ENCODE measurements at regions of chr12 and their contacts with region 1.

Region 1: GRCh38 chr12:94101738-94102660 is 46.4 kb upstream of the PLXNC1 start:
- DNase-seq: peak; percentile 93
- ATAC-seq: peak; percentile 85
- H3K4me3 Mint-ChIP-seq: peak overlapping the region; percentile 79
- H3K27ac Mint-ChIP-seq: peak overlapping the region; percentile 84
- H3K4me1 Mint-ChIP-seq: peaks cover 39% of the 10 kb centered on the region
- H3K27me3 Mint-ChIP-seq: peaks cover 9% of the 10 kb centered on the region

Region 2: DNA sequence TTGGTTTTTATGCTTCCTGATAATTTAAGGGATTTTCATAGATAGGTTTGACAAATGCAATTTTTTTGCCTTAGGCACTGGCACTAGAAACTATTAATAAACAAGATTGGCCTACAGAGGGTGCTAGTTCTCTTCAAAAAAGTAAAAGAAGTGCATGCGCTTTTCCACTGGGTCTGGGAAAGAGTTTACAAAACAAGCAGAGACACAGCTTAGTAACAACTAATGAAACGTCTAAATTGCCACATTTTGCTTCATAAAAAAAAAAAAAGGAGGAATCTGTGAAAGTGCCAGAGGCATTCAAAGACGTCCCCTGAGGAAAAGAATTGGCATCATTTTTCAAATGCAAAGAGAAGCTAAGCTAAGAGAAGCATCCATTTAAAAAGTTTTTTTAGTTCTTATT is 1114.6 kb before region 1 on chr12:
- CTCF ChIA-PET with region 1: interaction called, 34 read pairs
- POLR2A ChIA-PET with region 1: no interaction called
- DNase-seq: peak; percentile 35
- ATAC-seq: peak; percentile 72
- H3K4me3 Mint-ChIP-seq: no peak overlapping the region
- H3K27ac Mint-ChIP-seq: no peak overlapping the region
- H3K4me1 Mint-ChIP-seq: peaks cover 10% of the 10 kb centered on the region
- H3K27me3 Mint-ChIP-seq: peaks cover 10% of the 10 kb centered on the region

Region 3: GRCh38 chr12:93502802-93503623 is 599.0 kb before region 1 on chr12:
- CTCF ChIA-PET with region 1: interaction called, 239 read pairs
- POLR2A ChIA-PET with region 1: interaction called, 7 read pairs
- DNase-seq: peak; percentile 78
- ATAC-seq: no peak
- H3K4me3 Mint-ChIP-seq: no peak overlapping the region
- H3K27ac Mint-ChIP-seq: no peak overlapping the region
- H3K4me1 Mint-ChIP-seq: peaks cover 17% of the 10 kb centered on the region
- H3K27me3 Mint-ChIP-seq: no peaks in the 10 kb centered on the region

Region 4: DNA sequence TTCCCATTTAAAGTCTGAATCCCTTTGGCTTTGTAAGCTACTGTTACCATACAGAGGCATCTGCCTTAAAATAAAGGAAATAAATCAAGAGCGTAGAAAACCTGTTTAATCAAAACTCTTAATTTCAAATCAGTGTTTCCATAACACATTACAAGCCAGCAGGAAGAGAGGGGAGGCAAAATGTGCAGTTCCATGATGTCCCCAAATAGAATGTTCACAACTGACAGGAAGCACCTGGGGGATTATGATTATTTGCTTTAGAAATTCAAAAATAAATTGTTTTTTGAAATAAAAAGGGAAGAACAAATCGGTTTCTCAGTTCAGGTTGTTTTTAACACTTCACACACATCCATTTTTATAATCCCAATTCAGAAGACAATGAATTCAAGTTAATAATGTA is 508.2 kb before region 1 on chr12:
- CTCF ChIA-PET with region 1: interaction called, 14 read pairs
- POLR2A ChIA-PET with region 1: no interaction called
- DNase-seq: no peak
- ATAC-seq: no peak
- H3K4me3 Mint-ChIP-seq: no peak overlapping the region
- H3K27ac Mint-ChIP-seq: no peak overlapping the region
- H3K4me1 Mint-ChIP-seq: peaks cover 24% of the 10 kb centered on the region
- H3K27me3 Mint-ChIP-seq: peaks cover 50% of the 10 kb centered on the region

Region 5: GRCh38 chr12:93785262-93786010 is 316.6 kb before region 1 on chr12:
- CTCF ChIA-PET with region 1: interaction called, 32 read pairs
- POLR2A ChIA-PET with region 1: interaction called, 3 read pairs
- DNase-seq: peak; percentile 60
- ATAC-seq: peak; percentile 75
- H3K4me3 Mint-ChIP-seq: peak overlapping the region; percentile 17
- H3K27ac Mint-ChIP-seq: peak overlapping the region; percentile 53
- H3K4me1 Mint-ChIP-seq: peaks cover 62% of the 10 kb centered on the region
- H3K27me3 Mint-ChIP-seq: no peaks in the 10 kb centered on the region

Region 6: DNA sequence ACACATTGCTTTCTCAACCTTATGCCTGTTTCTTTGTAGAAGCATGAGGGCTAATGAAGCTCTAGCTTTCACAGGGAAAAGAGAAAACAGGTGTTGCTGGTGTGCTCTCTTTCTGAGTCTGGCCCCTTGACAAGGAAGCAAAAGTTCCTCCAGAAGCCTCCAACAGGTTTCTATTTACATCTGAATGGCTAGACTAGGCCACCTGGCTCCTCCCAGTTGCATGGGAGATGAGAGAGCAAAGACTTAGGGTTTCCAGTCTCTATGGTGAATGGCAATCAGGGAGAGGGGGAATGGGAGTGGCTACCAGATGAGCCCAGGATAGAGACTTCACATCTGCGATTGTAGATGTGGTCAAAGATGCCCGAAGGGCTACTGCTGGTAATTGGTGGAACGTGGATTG is 91.7 kb before region 1 on chr12:
- CTCF ChIA-PET with region 1: interaction called, 23 read pairs
- POLR2A ChIA-PET with region 1: no interaction called
- DNase-seq: no peak
- ATAC-seq: no peak
- H3K4me3 Mint-ChIP-seq: no peak overlapping the region
- H3K27ac Mint-ChIP-seq: no peak overlapping the region
- H3K4me1 Mint-ChIP-seq: peaks cover 20% of the 10 kb centered on the region
- H3K27me3 Mint-ChIP-seq: peaks cover 3% of the 10 kb centered on the region

Region 7: GRCh38 chr12:94126067-94126466 is 24.1 kb after region 1 on chr12:
- CTCF ChIA-PET with region 1: interaction called, 107 read pairs
- POLR2A ChIA-PET with region 1: no interaction called
- DNase-seq: no peak
- ATAC-seq: peak; percentile 28
- H3K4me3 Mint-ChIP-seq: peak overlapping the region; percentile 54
- H3K27ac Mint-ChIP-seq: peak overlapping the region; percentile 84
- H3K4me1 Mint-ChIP-seq: peaks cover 65% of the 10 kb centered on the region
- H3K27me3 Mint-ChIP-seq: peaks cover 2% of the 10 kb centered on the region

Measured in activated CD8-positive, alpha-beta T cell treated with anti-CD3 and anti-CD28 coated beads, Interleukin-2, amount 10 ng/mL, durations not matched to agents 7 days and 5 days (primary cell).